ENCODE measurements at regions of chr3 and their contacts with region 1.

Region 1: DNA sequence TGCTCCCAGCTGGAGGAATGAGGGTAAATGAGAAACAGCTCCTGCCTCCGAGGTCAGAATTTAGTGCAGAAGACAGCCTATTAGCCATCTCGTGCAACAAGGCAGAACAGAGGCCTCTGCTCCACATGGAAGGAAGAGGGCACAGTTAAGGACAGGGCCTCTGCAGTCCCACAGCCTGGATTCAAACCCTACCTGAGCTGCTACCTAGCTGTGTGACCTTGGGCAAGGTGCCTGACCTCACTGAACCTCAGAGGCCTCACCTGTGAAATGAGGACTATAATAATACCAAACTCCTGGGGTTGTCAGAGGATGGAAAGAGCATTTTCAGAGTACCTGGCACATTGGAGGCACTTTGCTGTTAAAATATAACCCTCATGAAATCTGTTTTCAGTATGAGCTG is 285.7 kb upstream of the CTNNB1 start:
- DNase-seq: no peak
- H3K4me3 Mint-ChIP-seq: no peak overlapping the region
- H3K27ac Mint-ChIP-seq: peak overlapping the region; percentile 13
- H3K4me1 Mint-ChIP-seq: peaks cover 30% of the 10 kb centered on the region
- H3K27me3 Mint-ChIP-seq: no peaks in the 10 kb centered on the region
- CTCF ChIP-seq: no peak

Region 2: GRCh38 chr3:40278791-40279190 is 634.9 kb before region 1 on chr3:
- CTCF ChIA-PET with region 1: no interaction called
- intact Hi-C with region 1: no loop called
- DNase-seq: no peak
- H3K4me3 Mint-ChIP-seq: no peak overlapping the region
- H3K27ac Mint-ChIP-seq: no peak overlapping the region
- H3K4me1 Mint-ChIP-seq: no peaks in the 10 kb centered on the region
- H3K27me3 Mint-ChIP-seq: peaks cover 8% of the 10 kb centered on the region
- CTCF ChIP-seq: no peak

Region 3: DNA sequence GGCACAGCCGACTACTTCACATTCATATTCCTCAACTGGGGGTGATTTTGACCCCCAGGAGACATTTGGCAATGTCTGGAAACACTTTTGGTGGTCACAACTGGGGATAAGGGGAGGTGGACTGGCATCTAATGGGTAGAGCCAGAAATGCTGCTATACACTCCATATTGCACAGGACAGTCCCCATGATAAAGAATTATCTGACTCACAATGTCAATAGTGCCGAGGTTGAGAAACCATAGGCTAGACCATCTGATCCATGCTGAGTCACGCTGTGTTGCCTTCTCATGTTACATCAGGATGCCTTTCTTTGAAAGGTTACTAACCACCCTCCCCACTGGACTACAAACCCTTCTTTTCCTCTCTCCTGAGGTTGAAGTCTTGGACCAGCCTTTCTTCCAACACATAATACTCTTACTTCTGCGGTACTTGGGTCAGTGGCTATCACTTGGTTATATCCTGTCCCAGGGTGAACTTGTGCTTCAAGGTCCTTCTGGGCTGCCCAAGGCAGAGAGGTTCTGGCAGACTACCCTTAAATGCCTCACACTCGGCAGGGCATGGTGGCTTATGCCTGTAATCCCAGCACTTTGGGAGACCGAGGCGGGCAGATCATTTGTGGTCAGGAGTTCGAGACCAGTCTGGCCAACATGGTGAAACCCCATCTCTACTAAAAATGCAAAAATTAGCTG is 354.5 kb after region 1 on chr3:
- CTCF ChIA-PET with region 1: interaction called, 11 read pairs
- intact Hi-C with region 1: no loop called
- DNase-seq: peak; percentile 67
- H3K4me3 Mint-ChIP-seq: no peak overlapping the region
- H3K27ac Mint-ChIP-seq: peak overlapping the region; percentile 61
- H3K4me1 Mint-ChIP-seq: peaks cover 23% of the 10 kb centered on the region
- H3K27me3 Mint-ChIP-seq: no peaks in the 10 kb centered on the region
- CTCF ChIP-seq: no peak

Measured in Calu3 (cell line).